CD8-positive, alpha-beta T cell (primary cell): ENCODE measurements at regions of chr1 and their contacts with region 1.

Region 1: GRCh38 chr1:16009030-16009709 is 5.1 kb downstream of the SRARP start:
- DNase-seq: peak; percentile 53 to 82 (median 73)
- ATAC-seq: peak; percentile 69
- H3K4me3 ChIP-seq: no peak overlapping the region
- H3K4me3 Mint-ChIP-seq: no peak overlapping the region
- H3K27ac ChIP-seq: no peak overlapping the region
- H3K27ac Mint-ChIP-seq: no peak overlapping the region
- H3K4me1 ChIP-seq: peaks cover 5% of the 10 kb centered on the region
- H3K4me1 Mint-ChIP-seq: peaks cover 4% of the 10 kb centered on the region
- H3K27me3 ChIP-seq: peaks cover 0 to 2% of the 10 kb centered on the region in 2 experiments
- H3K27me3 Mint-ChIP-seq: peaks cover 5% of the 10 kb centered on the region
- CTCF ChIP-seq: peak; percentile 99

Region 2: GRCh38 chr1:15501208-15502032 is 507.8 kb before region 1 on chr1:
- CTCF ChIA-PET with region 1: no interaction called
- POLR2A ChIA-PET with region 1: no interaction called
- intact Hi-C with region 1: no loop called
- DNase-seq: peak in 7 of 9 experiments; percentile 7 to 57 (median 44)
- ATAC-seq: peak; percentile 40
- H3K4me3 ChIP-seq: no peak overlapping the region
- H3K4me3 Mint-ChIP-seq: no peak overlapping the region
- H3K27ac ChIP-seq: no peak overlapping the region
- H3K27ac Mint-ChIP-seq: no peak overlapping the region
- H3K4me1 ChIP-seq: no peaks in the 10 kb centered on the region
- H3K4me1 Mint-ChIP-seq: no peaks in the 10 kb centered on the region
- H3K27me3 ChIP-seq: no peaks in the 10 kb centered on the region
- H3K27me3 Mint-ChIP-seq: no peaks in the 10 kb centered on the region
- CTCF ChIP-seq: peak; percentile 59

Region 3: DNA sequence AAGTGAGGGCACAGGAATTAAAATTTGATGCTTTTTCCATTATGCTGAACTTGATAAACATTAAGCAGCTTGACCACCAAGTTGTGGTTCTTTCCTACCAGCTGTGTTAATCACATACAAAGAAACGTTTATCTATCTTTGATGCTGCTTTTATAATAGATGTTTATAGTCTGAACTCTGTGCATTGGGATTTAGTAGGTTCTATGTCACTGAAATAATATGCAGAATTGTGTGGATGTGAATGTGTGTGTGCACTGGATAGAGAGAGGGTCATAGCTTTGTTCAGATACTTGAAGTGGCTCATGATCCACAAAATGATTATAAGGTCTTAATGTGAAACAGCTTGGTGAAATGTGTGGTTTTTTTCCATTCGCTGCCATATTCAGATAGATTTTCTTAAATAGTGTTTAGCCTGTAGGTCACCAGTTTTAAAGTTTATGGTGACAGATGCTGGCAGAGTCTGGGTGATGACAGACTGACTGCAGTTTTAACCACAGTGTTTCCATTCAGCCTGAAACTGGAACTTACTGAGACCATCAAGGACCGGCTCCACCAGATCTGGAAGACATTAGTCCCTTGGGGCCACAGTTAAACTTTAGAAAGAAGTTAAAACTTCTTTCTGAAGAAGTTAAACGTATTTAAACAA is 381.7 kb before region 1 on chr1:
- CTCF ChIA-PET with region 1: no interaction called
- POLR2A ChIA-PET with region 1: no interaction called
- intact Hi-C with region 1: no loop called
- DNase-seq: no peak
- ATAC-seq: no peak
- H3K4me3 ChIP-seq: no peak overlapping the region
- H3K4me3 Mint-ChIP-seq: no peak overlapping the region
- H3K27ac ChIP-seq: no peak overlapping the region
- H3K27ac Mint-ChIP-seq: peak overlapping the region; percentile 66
- H3K4me1 ChIP-seq: peaks cover 10% of the 10 kb centered on the region
- H3K4me1 Mint-ChIP-seq: peaks cover 39% of the 10 kb centered on the region
- H3K27me3 ChIP-seq: no peaks in the 10 kb centered on the region
- H3K27me3 Mint-ChIP-seq: no peaks in the 10 kb centered on the region
- CTCF ChIP-seq: no peak

Region 4: DNA sequence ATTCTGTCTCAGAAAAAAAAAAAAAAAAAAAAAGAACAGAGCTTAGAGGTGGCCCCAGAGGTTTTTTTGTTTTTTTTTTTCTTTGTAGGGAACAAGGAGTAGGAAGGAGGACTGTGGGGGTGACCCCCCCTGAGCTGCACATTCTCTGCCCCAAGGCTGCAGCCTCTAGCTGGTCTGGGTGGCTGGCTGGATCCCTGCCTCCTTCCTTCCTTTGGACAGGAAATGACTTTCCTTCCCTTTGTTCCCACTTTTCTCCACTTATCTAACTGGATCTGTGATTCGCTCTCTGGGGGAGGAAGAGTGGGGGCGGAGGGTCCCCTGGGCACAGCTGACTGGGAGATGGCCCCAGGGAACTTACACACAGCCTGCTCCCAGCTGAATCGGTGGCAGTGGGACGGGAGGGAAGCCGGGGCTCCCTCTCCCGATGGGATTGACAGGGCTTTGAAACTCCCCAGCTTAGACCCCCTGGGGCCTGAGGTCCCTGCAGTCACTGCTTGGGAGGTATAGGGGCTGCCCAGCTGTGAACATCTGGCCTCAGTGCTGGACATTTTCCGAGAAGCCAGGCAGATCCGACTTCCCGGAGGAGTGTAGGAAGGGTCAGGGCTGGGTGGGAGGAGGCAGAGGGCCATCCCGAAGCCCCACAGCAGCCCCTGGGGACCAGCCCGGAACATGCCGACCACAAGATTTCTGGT is 248.5 kb before region 1 on chr1:
- CTCF ChIA-PET with region 1: no interaction called
- POLR2A ChIA-PET with region 1: no interaction called
- intact Hi-C with region 1: no loop called
- DNase-seq: no peak
- ATAC-seq: no peak
- H3K4me3 ChIP-seq: no peak overlapping the region
- H3K4me3 Mint-ChIP-seq: no peak overlapping the region
- H3K27ac ChIP-seq: no peak overlapping the region
- H3K27ac Mint-ChIP-seq: no peak overlapping the region
- H3K4me1 ChIP-seq: peaks cover 19% of the 10 kb centered on the region
- H3K4me1 Mint-ChIP-seq: peaks cover 18% of the 10 kb centered on the region
- H3K27me3 ChIP-seq: peaks cover 20 to 24% of the 10 kb centered on the region in 2 experiments
- H3K27me3 Mint-ChIP-seq: peaks cover 49% of the 10 kb centered on the region
- CTCF ChIP-seq: no peak

Region 5: GRCh38 chr1:16187748-16188401 is 178.7 kb after region 1 on chr1:
- CTCF ChIA-PET with region 1: interaction called, 4 read pairs
- POLR2A ChIA-PET with region 1: no interaction called
- intact Hi-C with region 1: loop called in 1 of 2 experiments (anchors 1 kb)
- DNase-seq: peak; percentile 55 to 89 (median 76)
- ATAC-seq: peak; percentile 97
- H3K4me3 ChIP-seq: no peak overlapping the region
- H3K4me3 Mint-ChIP-seq: no peak overlapping the region
- H3K27ac ChIP-seq: no peak overlapping the region
- H3K27ac Mint-ChIP-seq: no peak overlapping the region
- H3K4me1 ChIP-seq: peaks cover 5% of the 10 kb centered on the region
- H3K4me1 Mint-ChIP-seq: peaks cover 4% of the 10 kb centered on the region
- H3K27me3 ChIP-seq: peaks cover 0 to 2% of the 10 kb centered on the region in 2 experiments
- H3K27me3 Mint-ChIP-seq: peaks cover 7% of the 10 kb centered on the region
- CTCF ChIP-seq: peak; percentile 97

Region 6: GRCh38 chr1:17377334-17377953 is 1368.3 kb after region 1 on chr1:
- CTCF ChIA-PET with region 1: no interaction called
- POLR2A ChIA-PET with region 1: no interaction called
- intact Hi-C with region 1: no loop called
- DNase-seq: no peak
- ATAC-seq: no peak
- H3K4me3 ChIP-seq: no peak overlapping the region
- H3K4me3 Mint-ChIP-seq: no peak overlapping the region
- H3K27ac ChIP-seq: no peak overlapping the region
- H3K27ac Mint-ChIP-seq: no peak overlapping the region
- H3K4me1 ChIP-seq: no peaks in the 10 kb centered on the region
- H3K4me1 Mint-ChIP-seq: no peaks in the 10 kb centered on the region
- H3K27me3 ChIP-seq: no peaks in the 10 kb centered on the region
- H3K27me3 Mint-ChIP-seq: peaks cover 19% of the 10 kb centered on the region
- CTCF ChIP-seq: no peak